ENCODE measurements at regions of chr2 and their contacts with region 1.

Region 1: GRCh38 chr2:240021488-240022104 is 3.5 kb downstream of the NDUFA10 start:
- DNase-seq: peak; percentile 79
- CTCF ChIP-seq: peak; percentile 77

Region 2: GRCh38 chr2:240000686-240001085 is 20.9 kb before region 1 on chr2:
- CTCF ChIA-PET with region 1: interaction called, 10 read pairs
- POLR2A ChIA-PET with region 1: no interaction called
- DNase-seq: no peak
- CTCF ChIP-seq: no peak

Region 3: DNA sequence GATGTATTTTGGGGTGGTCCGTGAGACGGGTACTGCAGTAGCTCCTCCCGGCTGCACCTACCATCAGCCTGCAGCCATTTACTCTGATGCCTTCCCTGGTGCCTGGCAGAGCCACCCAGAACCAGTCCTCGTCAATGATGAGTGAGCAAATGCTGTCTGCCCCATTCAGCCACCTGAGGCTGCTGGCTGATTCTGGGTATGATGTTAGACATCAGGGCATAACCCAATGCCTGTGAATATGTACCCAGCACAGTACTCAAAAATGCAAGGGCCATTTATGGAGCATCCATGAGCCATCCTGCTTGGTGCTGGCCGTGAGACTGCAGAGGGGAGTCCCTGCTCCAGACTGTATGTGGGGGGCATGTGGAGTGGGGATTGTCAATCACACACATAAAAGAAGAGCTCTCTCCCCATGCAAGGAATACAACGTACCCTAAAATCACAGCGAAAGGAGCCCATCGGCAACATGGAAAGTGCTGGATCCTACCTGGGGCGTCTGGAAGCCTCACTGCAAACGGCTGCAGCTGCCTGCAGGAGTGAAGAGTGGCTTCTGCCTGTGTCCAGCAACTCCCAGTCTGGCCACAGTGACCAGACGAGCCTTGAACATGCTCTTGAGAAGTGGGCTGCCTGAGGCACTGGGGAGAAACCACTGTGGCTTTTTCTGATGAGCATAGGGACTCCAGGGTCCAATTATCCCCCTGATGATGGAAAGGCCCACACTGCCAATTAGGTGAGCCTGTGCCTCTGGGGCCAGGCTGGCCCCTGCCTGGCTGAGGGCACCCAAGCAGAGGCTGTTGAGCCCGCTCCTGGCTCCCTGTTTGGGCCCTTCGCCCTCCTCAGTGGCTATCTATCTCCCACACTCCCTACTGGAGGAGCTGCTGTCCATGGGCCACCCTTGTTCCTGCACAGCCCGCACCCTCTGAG is 11.1 kb after region 1 on chr2:
- CTCF ChIA-PET with region 1: interaction called, 11 read pairs
- POLR2A ChIA-PET with region 1: no interaction called
- DNase-seq: no peak
- CTCF ChIP-seq: no peak

Region 4: DNA sequence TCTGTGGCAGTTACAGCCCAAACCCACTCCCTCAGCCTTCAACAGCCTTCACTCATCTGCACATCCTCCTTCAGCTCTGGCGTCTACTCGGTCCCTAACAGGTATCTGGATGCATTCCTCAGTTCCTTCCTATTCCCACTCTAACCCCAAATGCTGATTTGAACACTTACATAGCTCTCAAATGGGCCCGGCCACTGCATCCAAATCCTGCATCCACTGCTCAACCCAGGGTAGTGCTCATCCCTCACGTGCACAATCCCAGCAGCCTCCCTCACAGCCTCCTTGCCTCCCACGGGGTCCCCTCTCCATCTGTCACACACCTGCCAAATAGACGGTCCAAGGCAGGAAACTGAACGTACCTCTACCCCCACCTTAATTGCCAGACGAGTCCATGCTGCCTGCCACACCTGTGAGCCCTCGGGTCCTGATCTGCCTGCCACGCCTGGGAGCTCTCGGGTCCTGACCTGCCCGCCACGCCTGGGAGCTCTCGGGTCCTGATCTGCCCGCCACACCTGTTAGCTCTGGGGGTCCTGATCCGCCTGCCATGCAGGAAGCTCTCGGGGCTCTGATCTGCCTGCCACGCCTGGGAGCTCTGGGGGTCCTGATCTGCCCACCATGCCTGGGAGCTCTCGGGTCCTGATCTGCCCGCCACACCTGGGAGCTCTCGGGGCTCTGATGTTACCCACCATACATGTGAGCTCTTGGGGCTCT is 21.8 kb after region 1 on chr2:
- CTCF ChIA-PET with region 1: no interaction called
- POLR2A ChIA-PET with region 1: no interaction called
- DNase-seq: no peak
- CTCF ChIP-seq: no peak

Region 5: DNA sequence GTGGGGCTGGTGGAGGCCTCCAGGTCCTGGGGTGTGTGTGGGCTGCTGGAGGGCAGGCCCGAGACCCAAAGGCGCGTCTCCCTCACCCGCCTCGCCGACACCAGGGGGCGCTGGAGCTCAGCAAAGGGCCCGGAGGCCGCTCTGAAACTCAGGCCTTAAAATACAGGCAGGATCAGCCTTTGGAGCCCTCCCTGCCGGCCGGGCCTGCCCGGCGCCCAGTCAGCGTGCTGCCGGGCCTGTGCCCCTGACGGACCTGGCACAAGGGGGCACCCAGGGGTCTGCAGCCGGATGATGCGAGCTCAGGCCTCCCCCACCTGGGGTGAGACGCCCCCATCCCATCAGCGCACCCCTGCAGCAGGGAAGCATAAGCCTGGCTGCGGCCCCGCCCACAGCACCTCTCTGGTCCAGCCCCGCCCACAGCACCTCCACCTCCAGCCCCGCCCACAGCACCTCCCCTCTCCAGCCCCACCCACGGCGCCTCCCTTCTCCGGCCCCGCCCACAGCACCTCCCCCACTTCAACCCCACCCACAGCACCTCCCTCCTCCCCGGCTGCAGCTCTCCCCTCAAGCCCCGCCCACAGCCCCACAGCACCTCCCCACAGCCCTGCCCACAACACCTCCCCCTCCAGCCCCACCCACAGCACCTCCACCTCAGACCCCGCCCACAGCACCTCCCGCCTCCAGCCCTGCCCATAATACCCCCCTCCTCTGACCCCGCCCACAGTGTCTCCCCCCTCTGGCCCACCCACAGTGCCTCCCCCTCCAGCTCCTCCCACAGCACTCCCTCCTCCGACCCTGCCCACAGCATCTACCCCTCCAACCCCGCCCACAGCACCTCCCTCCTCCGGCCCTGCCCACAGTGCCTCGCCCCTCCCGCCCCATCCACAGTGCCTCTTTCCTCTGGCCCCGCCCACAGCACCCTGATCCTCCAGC is 211.6 kb after region 1 on chr2:
- CTCF ChIA-PET with region 1: no interaction called
- POLR2A ChIA-PET with region 1: no interaction called
- DNase-seq: peak; percentile 76
- CTCF ChIP-seq: peak; percentile 66

Measured in GM10248 (cell line).